ENCODE measurements at regions of chrX and their contacts with region 1.

Region 1: GRCh38 chrX:109856974-109857373 is 123.9 kb upstream of the ACSL4 start:
- DNase-seq: no peak
- H3K4me3 Mint-ChIP-seq: no peak overlapping the region
- H3K27ac Mint-ChIP-seq: no peak overlapping the region
- H3K4me1 Mint-ChIP-seq: peaks cover 5% of the 10 kb centered on the region
- H3K27me3 Mint-ChIP-seq: peaks cover 4% of the 10 kb centered on the region

Region 2: GRCh38 chrX:109782994-109783700 is 73.8 kb before region 1 on chrX:
- intact Hi-C with region 1: loop called (anchors 5 kb)
- DNase-seq: no peak
- H3K4me3 Mint-ChIP-seq: peak overlapping the region; percentile 76
- H3K27ac Mint-ChIP-seq: peak overlapping the region; percentile 92
- H3K4me1 Mint-ChIP-seq: peaks cover 17% of the 10 kb centered on the region
- H3K27me3 Mint-ChIP-seq: no peaks in the 10 kb centered on the region

Region 3: GRCh38 chrX:109797311-109797975 is 59.5 kb before region 1 on chrX:
- intact Hi-C with region 1: loop called (anchors 5 kb)
- DNase-seq: no peak
- H3K4me3 Mint-ChIP-seq: no peak overlapping the region
- H3K27ac Mint-ChIP-seq: no peak overlapping the region
- H3K4me1 Mint-ChIP-seq: no peaks in the 10 kb centered on the region
- H3K27me3 Mint-ChIP-seq: no peaks in the 10 kb centered on the region

Region 4: GRCh38 chrX:109902665-109903064 is 45.7 kb after region 1 on chrX:
- intact Hi-C with region 1: no loop called
- DNase-seq: no peak
- H3K4me3 Mint-ChIP-seq: no peak overlapping the region
- H3K27ac Mint-ChIP-seq: no peak overlapping the region
- H3K4me1 Mint-ChIP-seq: no peaks in the 10 kb centered on the region
- H3K27me3 Mint-ChIP-seq: peaks cover 3% of the 10 kb centered on the region

Measured in activated T-helper 1 cell treated with anti-CD3 and anti-CD28 coated beads, Interleukin-12 subunit alpha, Interleukin-12 subunit beta, Interleukin-2, Interleukin-4 antibody, amounts not matched to agents 30 ng/mL and 10 ng/mL and 1 ng/mL, durations not matched to agents 14 hours and 24 hours and 36 hours (primary cell).